Endothelial cell of umbilical vein (primary cell): ENCODE measurements at regions of chr22 and their contacts with region 1.

Region 1: DNA sequence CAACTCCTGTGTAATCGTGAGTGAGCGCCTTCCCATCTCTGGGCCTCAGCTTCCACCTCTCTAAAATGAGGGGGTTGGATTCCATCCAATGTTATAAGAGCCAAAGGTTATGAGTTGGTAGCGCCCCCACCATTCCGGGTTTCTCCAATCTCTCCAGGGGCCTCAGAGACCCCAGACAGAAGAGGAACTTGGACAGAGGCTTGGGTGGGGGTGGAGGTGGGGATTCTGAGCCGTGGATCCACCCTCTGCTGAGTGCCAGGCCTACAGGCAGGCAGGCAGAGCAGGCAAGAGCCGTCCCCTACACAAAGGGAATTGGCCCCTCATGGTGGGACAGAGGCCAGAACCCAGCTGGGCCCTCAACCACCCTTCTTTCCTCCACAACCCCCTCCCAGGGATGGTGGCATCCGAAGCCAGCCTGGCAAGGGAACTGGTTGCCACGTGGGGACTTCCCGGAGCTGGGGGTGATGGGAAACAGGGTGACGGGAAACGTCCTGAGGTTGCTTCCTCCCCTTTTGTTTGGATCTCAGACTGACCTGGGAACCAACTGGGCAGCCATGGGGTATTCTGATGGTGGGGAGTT is 31.8 kb downstream of the TXN2 start:
- DNase-seq: no peak
- H3K4me3 ChIP-seq: no peak overlapping the region
- H3K27ac ChIP-seq: no peak overlapping the region
- H3K4me1 ChIP-seq: peaks cover 21% of the 10 kb centered on the region
- H3K27me3 ChIP-seq: no peaks in the 10 kb centered on the region
- CTCF ChIP-seq: no peak
- POLR2A ChIP-seq: no peak

Region 2: GRCh38 chr22:36461669-36462649 is 12.3 kb after region 1 on chr22:
- CTCF ChIA-PET with region 1: no interaction called
- POLR2A ChIA-PET with region 1: interaction called, 5 read pairs
- dilution Hi-C with region 1: no loop called
- intact Hi-C with region 1: loop called (anchors 2 kb)
- DNase-seq: peak; percentile 67
- H3K4me3 ChIP-seq: no peak overlapping the region
- H3K27ac ChIP-seq: peak overlapping the region; percentile 59
- H3K4me1 ChIP-seq: peaks cover 49% of the 10 kb centered on the region
- H3K27me3 ChIP-seq: no peaks in the 10 kb centered on the region
- CTCF ChIP-seq: no peak
- POLR2A ChIP-seq: no peak